PC-9 (cell line): ENCODE measurements at regions of chr20 and their contacts with region 1.

Region 1: DNA sequence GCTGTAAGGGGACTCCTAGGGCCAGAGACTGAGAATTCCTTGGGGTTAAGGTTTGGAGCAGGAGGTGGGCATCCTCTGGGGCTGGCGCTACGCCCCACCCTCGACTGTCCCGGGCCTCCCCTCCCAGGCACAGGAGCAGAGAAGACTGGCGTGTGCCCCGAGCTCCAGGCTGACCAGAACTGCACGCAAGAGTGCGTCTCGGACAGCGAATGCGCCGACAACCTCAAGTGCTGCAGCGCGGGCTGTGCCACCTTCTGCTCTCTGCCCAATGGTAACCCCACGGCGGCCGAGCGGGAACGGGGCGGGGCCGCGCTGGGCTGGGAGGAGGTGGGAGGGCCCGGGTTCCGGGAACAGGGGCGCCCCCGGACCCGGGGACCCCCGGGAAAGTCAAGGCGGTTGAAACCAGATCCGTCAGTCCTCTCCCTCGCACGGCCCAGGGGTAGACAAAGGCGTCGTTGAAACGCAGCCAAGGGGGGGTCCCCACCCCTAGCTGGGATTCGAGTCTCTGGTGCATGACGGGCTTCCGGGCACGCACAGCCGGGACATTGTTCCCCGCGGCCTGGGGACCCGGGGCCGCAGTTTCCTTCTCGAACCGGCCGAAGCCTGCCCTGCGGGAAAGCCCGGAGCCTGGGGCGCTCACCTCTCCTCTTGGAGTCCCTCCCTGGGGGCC is 844 bp downstream of the WFDC2 start:
- DNase-seq: peak; percentile 63 to 82
- H3K4me3 ChIP-seq: peak overlapping the region; percentile 67
- H3K27ac ChIP-seq: peak overlapping the region; percentile 88
- H3K4me1 ChIP-seq: peaks cover 29% of the 10 kb centered on the region
- H3K27me3 ChIP-seq: no peaks in the 10 kb centered on the region
- CTCF ChIP-seq: no peak

Region 2: GRCh38 chr20:45362804-45363610 is 107.4 kb before region 1 on chr20 and contains the start of gene SYS1:
- CTCF ChIA-PET with region 1: interaction called, 10 read pairs
- POLR2A ChIA-PET with region 1: no interaction called
- intact Hi-C with region 1: no loop called
- DNase-seq: peak; percentile 97 to 99
- H3K4me3 ChIP-seq: peak within 1 kb of the TSS; percentile 83
- H3K27ac ChIP-seq: peak within 1 kb of the TSS; percentile 76
- H3K4me1 ChIP-seq: peaks cover 29% of the 10 kb centered on the region
- H3K27me3 ChIP-seq: no peaks in the 10 kb centered on the region
- CTCF ChIP-seq: peak; percentile 92
- total RNA-seq, gene SYS1: 35.1 and 38.8 TPM in 2 replicates

Region 3: GRCh38 chr20:45518282-45518681 is 47.9 kb after region 1 on chr20:
- CTCF ChIA-PET with region 1: no interaction called
- POLR2A ChIA-PET with region 1: interaction called, 4 read pairs
- intact Hi-C with region 1: loop called (anchors 1 kb)
- DNase-seq: peak; percentile 85 to 96
- H3K4me3 ChIP-seq: peak overlapping the region; percentile 4; the same call in 1 of the 2 replicates
- H3K27ac ChIP-seq: peak overlapping the region; percentile 83
- H3K4me1 ChIP-seq: peaks cover 24% of the 10 kb centered on the region
- H3K27me3 ChIP-seq: no peaks in the 10 kb centered on the region
- CTCF ChIP-seq: no peak

Region 4: GRCh38 chr20:45629496-45630100 is 159.2 kb after region 1 on chr20 and contains the start of gene WFDC10A:
- CTCF ChIA-PET with region 1: no interaction called
- POLR2A ChIA-PET with region 1: no interaction called
- intact Hi-C with region 1: loop called (anchors 10 kb)
- DNase-seq: peak; percentile 50 to 55
- H3K4me3 ChIP-seq: no peak within 1 kb of the TSS
- H3K27ac ChIP-seq: no peak within 1 kb of the TSS
- H3K4me1 ChIP-seq: no peaks in the 10 kb centered on the region
- H3K27me3 ChIP-seq: peaks cover 7% of the 10 kb centered on the region; the same call in 1 of the 2 replicates
- CTCF ChIP-seq: peak; percentile 84
- total RNA-seq, gene WFDC10A: not detected in 2 replicates

Region 5: DNA sequence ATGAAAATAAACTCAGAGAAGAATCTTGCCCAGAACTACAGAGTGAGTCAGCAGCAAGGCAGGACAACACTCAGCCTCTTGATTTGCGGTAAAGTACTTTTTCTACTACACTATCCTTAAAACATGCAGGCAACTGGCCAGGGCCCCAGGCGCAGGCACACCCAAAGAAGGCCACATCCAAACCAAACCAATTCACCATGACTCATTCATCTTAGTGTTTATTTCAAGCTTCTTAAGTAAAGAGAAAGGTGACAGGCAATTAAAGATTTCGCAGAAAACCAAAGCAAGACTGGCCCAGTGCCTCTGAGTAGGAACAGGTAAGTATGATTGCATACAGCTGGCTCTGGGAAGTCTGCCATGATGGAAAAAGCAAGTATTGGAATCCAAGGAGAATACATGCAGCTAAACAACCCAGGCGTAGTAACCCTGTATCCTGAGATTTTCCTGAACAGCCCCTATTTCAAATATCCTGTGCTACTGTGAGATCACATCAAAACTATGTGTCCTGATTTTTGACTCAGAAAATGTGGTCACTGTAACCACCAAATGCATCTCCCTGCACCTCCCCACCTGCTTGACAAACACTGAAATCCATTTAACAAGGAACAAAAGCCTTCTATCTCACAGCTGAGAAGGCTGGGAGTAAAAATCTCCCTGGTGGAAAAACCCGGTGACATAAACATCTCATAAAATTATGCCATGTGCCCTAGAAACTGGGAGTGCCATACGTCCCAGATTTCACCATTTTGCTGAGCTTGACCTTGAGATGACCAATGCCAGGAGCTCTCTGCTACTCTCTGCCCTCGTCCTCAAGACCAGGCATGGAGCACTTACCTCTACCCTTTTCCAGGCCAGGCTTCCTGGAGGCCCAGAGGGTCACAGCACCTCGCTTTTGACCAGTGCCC is 308.9 kb after region 1 on chr20:
- CTCF ChIA-PET with region 1: no interaction called
- POLR2A ChIA-PET with region 1: interaction called, 11 read pairs
- intact Hi-C with region 1: loop called (anchors 10 kb)
- DNase-seq: peak; percentile 96 to 100
- H3K4me3 ChIP-seq: no peak overlapping the region; the same call in 1 of the 2 replicates
- H3K27ac ChIP-seq: peak overlapping the region; percentile 99
- H3K4me1 ChIP-seq: peaks cover 74% of the 10 kb centered on the region
- H3K27me3 ChIP-seq: no peaks in the 10 kb centered on the region
- CTCF ChIP-seq: no peak